Natural killer cell (primary cell): ENCODE measurements at regions of chr3 and their contacts with region 1.

Region 1: GRCh38 chr3:184135149-184135910 is at the start of gene EIF2B5:
- DNase-seq: peak; percentile 73 to 94
- ATAC-seq: peak; percentile 90 to 94 (median 93)
- H3K4me3 ChIP-seq: peak within 1 kb of the TSS; percentile 97
- H3K4me3 Mint-ChIP-seq: peak within 1 kb of the TSS; percentile 99
- H3K27ac ChIP-seq: peak within 1 kb of the TSS; percentile 87
- H3K27ac Mint-ChIP-seq: peak within 1 kb of the TSS; percentile 93
- H3K4me1 ChIP-seq: peaks cover 18% of the 10 kb centered on the region
- H3K4me1 Mint-ChIP-seq: peaks cover 48 to 52% of the 10 kb centered on the region in 2 donors
- H3K27me3 ChIP-seq: no peaks in the 10 kb centered on the region
- H3K27me3 Mint-ChIP-seq: no peaks in the 10 kb centered on the region
- CTCF ChIP-seq: no peak
- total RNA-seq, gene EIF2B5: 44.5 to 59.4 (median 54.8) TPM

Region 2: DNA sequence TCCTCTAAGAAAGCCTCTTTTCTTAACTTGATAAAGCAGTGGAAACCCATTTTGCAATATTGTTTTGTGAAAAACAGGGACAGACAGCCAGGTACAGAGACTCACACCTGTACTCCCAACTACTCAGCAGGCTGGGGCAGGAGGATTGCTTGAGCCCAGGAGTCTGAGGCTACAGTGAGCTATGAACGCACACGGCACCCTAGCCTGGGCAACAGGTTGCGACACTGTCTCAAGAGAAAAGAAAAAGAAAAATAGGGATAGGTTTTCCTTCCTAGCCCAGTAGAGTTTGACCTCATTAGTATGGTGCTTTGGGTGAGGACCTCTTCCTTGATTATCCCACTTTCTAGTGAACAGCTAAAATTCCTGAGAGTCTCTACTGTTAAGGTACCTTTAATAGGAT is 455.3 kb before region 1 on chr3:
- intact Hi-C with region 1: no loop called
- DNase-seq: no peak
- ATAC-seq: no peak
- H3K4me3 ChIP-seq: no peak overlapping the region
- H3K4me3 Mint-ChIP-seq: no peak overlapping the region
- H3K27ac ChIP-seq: no peak overlapping the region
- H3K27ac Mint-ChIP-seq: no peak overlapping the region
- H3K4me1 ChIP-seq: no peaks in the 10 kb centered on the region
- H3K4me1 Mint-ChIP-seq: no peaks in the 10 kb centered on the region
- H3K27me3 ChIP-seq: no peaks in the 10 kb centered on the region
- H3K27me3 Mint-ChIP-seq: no peaks in the 10 kb centered on the region
- CTCF ChIP-seq: no peak

Region 3: GRCh38 chr3:184154885-184155643 is 19.7 kb after region 1 on chr3 and contains the start of gene DVL3:
- intact Hi-C with region 1: loop called (anchors 2 kb)
- DNase-seq: peak; percentile 46 to 66
- ATAC-seq: peak; percentile 71 to 84 (median 77)
- H3K4me3 ChIP-seq: peak within 1 kb of the TSS; percentile 98
- H3K4me3 Mint-ChIP-seq: peak within 1 kb of the TSS; percentile 94
- H3K27ac ChIP-seq: peak within 1 kb of the TSS; percentile 79
- H3K27ac Mint-ChIP-seq: peak within 1 kb of the TSS; percentile 78 to 92
- H3K4me1 ChIP-seq: peaks cover 42% of the 10 kb centered on the region
- H3K4me1 Mint-ChIP-seq: peaks cover 26 to 29% of the 10 kb centered on the region in 2 donors
- H3K27me3 ChIP-seq: no peaks in the 10 kb centered on the region
- H3K27me3 Mint-ChIP-seq: no peaks in the 10 kb centered on the region
- CTCF ChIP-seq: no peak
- total RNA-seq, gene DVL3: 59.1 to 77.5 (median 59.7) TPM